ENCODE measurements at regions of chr11 and their contacts with region 1.

Region 1: DNA sequence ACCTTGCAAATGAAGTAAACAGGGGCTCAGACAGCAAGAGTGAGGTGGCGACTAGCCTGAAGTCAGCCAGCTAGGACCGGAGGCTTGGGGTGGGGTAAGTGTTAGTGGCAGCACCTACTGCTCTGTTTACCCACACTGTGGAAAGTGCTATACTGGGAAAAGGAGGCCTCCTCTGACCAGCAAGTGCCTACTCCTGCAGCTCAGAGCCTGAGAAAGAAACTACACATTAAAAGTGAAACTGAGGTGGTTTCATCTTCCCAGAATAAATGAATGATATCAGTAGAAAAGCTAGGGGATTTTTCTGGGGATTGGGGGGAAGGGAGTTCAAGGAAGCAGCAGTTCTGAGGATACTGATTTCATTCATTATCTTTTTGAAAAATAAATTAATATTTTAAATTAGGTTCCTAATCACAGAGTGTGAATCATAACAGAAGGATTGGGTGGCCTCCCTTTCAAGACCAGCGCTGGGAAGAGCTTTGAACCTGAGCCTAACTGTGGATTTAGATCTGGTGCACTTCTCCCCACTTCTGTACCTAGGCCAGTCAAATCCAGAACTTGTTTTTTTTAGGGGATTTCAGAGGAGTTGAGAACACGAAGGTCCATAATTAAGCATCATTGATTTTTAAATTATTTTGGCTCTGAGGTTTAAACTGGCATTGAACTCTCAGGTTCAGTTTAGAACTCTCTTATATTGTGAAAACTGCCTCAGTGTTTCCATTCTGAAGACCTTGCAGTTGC is 48.1 kb upstream of the GRAMD1B start:
- DNase-seq: peak; percentile 85
- H3K4me3 Mint-ChIP-seq: peak overlapping the region; percentile 58
- H3K27ac Mint-ChIP-seq: peak overlapping the region; percentile 78
- H3K4me1 Mint-ChIP-seq: peaks cover 18% of the 10 kb centered on the region
- H3K27me3 Mint-ChIP-seq: peaks cover 6% of the 10 kb centered on the region

Region 2: GRCh38 chr11:122743949-122744348 is 638.0 kb before region 1 on chr11:
- CTCF ChIA-PET with region 1: no interaction called
- intact Hi-C with region 1: loop called (anchors 1 kb)
- DNase-seq: peak; percentile 91
- H3K4me3 Mint-ChIP-seq: no peak overlapping the region
- H3K27ac Mint-ChIP-seq: no peak overlapping the region
- H3K4me1 Mint-ChIP-seq: peaks cover 5% of the 10 kb centered on the region
- H3K27me3 Mint-ChIP-seq: peaks cover 6% of the 10 kb centered on the region

Region 3: GRCh38 chr11:123338330-123339005 is 43.5 kb before region 1 on chr11:
- CTCF ChIA-PET with region 1: interaction called, 3 read pairs
- intact Hi-C with region 1: loop called (anchors 1 kb)
- DNase-seq: peak; percentile 12
- H3K4me3 Mint-ChIP-seq: no peak overlapping the region
- H3K27ac Mint-ChIP-seq: no peak overlapping the region
- H3K4me1 Mint-ChIP-seq: peaks cover 10% of the 10 kb centered on the region
- H3K27me3 Mint-ChIP-seq: peaks cover 27% of the 10 kb centered on the region

Region 4: DNA sequence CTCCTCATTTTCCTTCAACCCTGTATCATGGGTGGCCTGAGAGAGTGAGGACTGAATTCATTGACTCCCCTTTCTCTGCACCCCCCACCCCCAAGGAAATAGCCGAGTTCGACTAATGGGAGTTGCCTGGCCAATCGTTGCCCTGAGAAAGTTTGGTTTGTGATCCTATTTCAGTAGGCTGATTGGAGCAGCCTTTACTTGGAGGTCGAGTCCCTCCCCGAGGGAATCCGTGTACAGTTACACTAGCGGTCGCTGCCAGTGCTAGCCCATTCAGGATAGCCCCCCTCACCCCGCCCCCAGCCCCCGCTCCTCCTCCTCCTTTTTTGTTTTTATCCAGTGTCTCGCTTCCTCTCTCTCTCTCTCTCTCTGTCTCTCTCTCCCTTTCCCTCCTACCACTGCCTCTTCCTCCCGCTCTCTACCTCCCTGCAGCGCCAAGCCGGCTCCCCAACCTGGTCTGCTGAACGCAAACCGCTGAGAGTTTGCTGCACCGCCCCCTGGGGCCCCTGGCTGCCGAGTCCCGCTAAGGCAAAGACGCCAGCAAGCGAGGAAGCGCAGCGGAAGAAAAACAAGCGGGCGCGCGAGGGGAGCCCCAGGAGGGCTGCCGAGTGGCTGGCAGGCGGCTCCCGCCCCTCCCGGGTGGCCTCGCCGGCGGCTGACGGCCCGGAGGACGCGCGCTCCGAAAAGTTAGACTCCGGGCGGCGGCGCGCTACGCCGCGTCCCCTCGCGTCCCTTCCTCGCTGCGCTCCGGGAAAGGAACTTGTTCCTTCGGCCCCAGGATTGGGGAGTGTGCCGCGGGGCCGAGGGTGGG is 48.1 kb after region 1 on chr11 and contains the start of gene GRAMD1B:
- CTCF ChIA-PET with region 1: no interaction called
- intact Hi-C with region 1: loop called (anchors 1 kb)
- DNase-seq: peak; percentile 87
- H3K4me3 Mint-ChIP-seq: peak within 1 kb of the TSS; percentile 92
- H3K27ac Mint-ChIP-seq: peak within 1 kb of the TSS; percentile 85
- H3K4me1 Mint-ChIP-seq: peaks cover 33% of the 10 kb centered on the region
- H3K27me3 Mint-ChIP-seq: peaks cover 2% of the 10 kb centered on the region
- total RNA-seq, gene GRAMD1B: 43.7 to 47.2 TPM

Region 5: DNA sequence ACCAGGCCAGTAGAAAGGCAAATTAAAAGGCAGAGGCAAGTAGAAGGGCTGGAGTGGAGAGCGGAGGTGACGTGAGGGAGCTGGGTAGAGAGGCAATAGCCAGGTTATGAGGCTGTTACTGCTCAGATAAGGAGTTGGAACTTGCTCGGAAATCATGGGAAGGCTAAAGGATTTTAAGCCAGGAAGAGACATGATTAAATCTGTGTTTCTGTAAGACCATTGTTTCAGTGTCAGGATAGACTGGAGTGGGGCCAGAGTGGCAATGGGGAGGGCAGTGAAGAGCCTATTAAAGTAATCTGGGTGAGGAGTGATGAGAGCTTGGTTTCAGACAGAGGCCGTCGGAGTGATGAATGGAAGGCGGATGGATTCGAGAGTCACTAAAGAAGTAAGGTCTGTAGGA is 87.1 kb after region 1 on chr11:
- CTCF ChIA-PET with region 1: no interaction called
- intact Hi-C with region 1: no loop called
- DNase-seq: no peak
- H3K4me3 Mint-ChIP-seq: no peak overlapping the region
- H3K27ac Mint-ChIP-seq: no peak overlapping the region
- H3K4me1 Mint-ChIP-seq: peaks cover 9% of the 10 kb centered on the region
- H3K27me3 Mint-ChIP-seq: no peaks in the 10 kb centered on the region

Region 6: DNA sequence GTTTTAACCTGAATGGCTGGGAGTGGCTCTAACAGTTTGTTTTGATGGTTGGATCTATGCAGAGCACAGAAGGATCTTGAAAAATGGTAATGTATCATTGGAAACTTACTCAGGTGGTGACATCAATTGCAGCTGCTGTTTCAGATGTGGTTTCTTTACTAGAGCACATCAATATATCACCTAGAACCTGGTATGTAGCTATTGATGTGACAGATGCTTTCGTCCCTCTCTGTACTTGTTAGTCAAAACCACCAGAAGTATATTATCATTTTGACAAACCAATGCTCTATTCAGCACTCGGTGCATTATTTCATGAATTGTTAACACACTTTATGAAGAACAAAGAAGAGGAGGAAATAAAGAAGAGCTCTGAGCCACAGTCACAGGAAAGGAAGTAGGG is 299.0 kb after region 1 on chr11:
- CTCF ChIA-PET with region 1: no interaction called
- intact Hi-C with region 1: loop called (anchors 1 kb)
- DNase-seq: peak; percentile 48
- H3K4me3 Mint-ChIP-seq: no peak overlapping the region
- H3K27ac Mint-ChIP-seq: peak overlapping the region; percentile 5
- H3K4me1 Mint-ChIP-seq: peaks cover 13% of the 10 kb centered on the region
- H3K27me3 Mint-ChIP-seq: no peaks in the 10 kb centered on the region